Endothelial cell of umbilical vein (primary cell): ENCODE measurements at regions of chr2 and their contacts with region 1.

Region 1: DNA sequence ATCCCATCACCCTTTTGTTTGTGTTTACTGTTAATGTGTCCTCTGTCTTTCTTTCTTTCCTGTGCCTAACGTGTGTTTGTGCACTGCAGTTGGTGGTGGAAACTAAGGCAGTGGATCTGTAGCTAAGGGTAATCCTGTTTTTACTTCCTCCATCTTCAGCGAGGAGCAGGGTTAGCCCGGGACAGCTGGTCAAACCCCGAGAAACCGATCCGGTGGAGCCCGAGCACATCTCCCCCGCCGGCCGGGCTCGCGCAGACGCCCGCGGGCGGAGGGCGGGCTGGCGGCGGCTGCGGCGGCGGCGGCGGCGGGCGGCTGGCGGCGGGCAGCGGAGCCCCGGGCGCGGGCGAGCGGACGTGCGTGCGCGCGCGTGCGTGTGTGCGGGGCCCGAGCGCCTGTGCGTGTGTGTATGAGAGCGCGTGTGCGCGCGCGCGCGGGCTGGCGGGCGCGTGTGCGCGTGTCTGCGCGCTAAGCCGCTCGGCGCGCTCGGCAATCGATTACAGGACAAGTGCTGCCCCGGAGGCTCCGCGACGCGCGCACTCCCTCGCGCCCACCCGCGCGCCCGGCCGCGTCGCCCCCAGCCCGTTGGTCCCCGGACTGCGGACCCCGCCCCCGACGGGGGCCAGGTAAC is at the start of gene IKZF2:
- DNase-seq: peak; percentile 85
- H3K4me3 ChIP-seq: peak within 1 kb of the TSS; percentile 70 to 99 (median 87)
- H3K27ac ChIP-seq: peak within 1 kb of the TSS; percentile 27
- H3K4me1 ChIP-seq: peaks cover 7% of the 10 kb centered on the region
- H3K27me3 ChIP-seq: peaks cover 18 to 46% of the 10 kb centered on the region in 2 experiments
- CTCF ChIP-seq: no peak
- POLR2A ChIP-seq: no peak
- total RNA-seq, gene IKZF2: 0.46 and 0.72 TPM in 2 replicates

Region 2: GRCh38 chr2:212686285-212686895 is 465.2 kb before region 1 on chr2:
- CTCF ChIA-PET with region 1: interaction called, 46 read pairs
- POLR2A ChIA-PET with region 1: no interaction called
- dilution Hi-C with region 1: no loop called
- intact Hi-C with region 1: loop called (anchors 1 kb)
- DNase-seq: peak; percentile 67
- H3K4me3 ChIP-seq: no peak overlapping the region
- H3K27ac ChIP-seq: no peak overlapping the region
- H3K4me1 ChIP-seq: peaks cover 3% of the 10 kb centered on the region
- H3K27me3 ChIP-seq: no peaks in the 10 kb centered on the region
- CTCF ChIP-seq: peak; percentile 60 to 68
- POLR2A ChIP-seq: no peak

Region 3: GRCh38 chr2:212777020-212777491 is 374.5 kb before region 1 on chr2:
- CTCF ChIA-PET with region 1: interaction called, 103 read pairs
- POLR2A ChIA-PET with region 1: no interaction called
- dilution Hi-C with region 1: no loop called
- intact Hi-C with region 1: loop called (anchors 1 kb)
- DNase-seq: peak; percentile 39
- H3K4me3 ChIP-seq: no peak overlapping the region
- H3K27ac ChIP-seq: no peak overlapping the region
- H3K4me1 ChIP-seq: no peaks in the 10 kb centered on the region
- H3K27me3 ChIP-seq: no peaks in the 10 kb centered on the region
- CTCF ChIP-seq: peak; percentile 30 to 39
- POLR2A ChIP-seq: no peak

Region 4: GRCh38 chr2:212843409-212844199 is 307.9 kb before region 1 on chr2:
- CTCF ChIA-PET with region 1: interaction called, 3 read pairs
- POLR2A ChIA-PET with region 1: no interaction called
- dilution Hi-C with region 1: no loop called
- intact Hi-C with region 1: loop called (anchors 5 kb)
- DNase-seq: peak; percentile 90
- H3K4me3 ChIP-seq: no peak overlapping the region
- H3K27ac ChIP-seq: peak overlapping the region; percentile 96
- H3K4me1 ChIP-seq: peaks cover 21% of the 10 kb centered on the region
- H3K27me3 ChIP-seq: no peaks in the 10 kb centered on the region
- CTCF ChIP-seq: no peak
- POLR2A ChIP-seq: no peak

Region 5: GRCh38 chr2:212863185-212863588 is 288.4 kb before region 1 on chr2:
- CTCF ChIA-PET with region 1: interaction called, 4 read pairs
- POLR2A ChIA-PET with region 1: no interaction called
- dilution Hi-C with region 1: no loop called
- intact Hi-C with region 1: loop called (anchors 1 kb)
- DNase-seq: peak; percentile 29
- H3K4me3 ChIP-seq: no peak overlapping the region
- H3K27ac ChIP-seq: no peak overlapping the region
- H3K4me1 ChIP-seq: no peaks in the 10 kb centered on the region
- H3K27me3 ChIP-seq: no peaks in the 10 kb centered on the region
- CTCF ChIP-seq: peak; percentile 37 to 45
- POLR2A ChIP-seq: no peak

Region 6: GRCh38 chr2:212892193-212892592 is 259.4 kb before region 1 on chr2:
- CTCF ChIA-PET with region 1: interaction called, 16 read pairs
- POLR2A ChIA-PET with region 1: no interaction called
- dilution Hi-C with region 1: no loop called
- intact Hi-C with region 1: loop called (anchors 1 kb)
- DNase-seq: peak; percentile 60
- H3K4me3 ChIP-seq: no peak overlapping the region
- H3K27ac ChIP-seq: no peak overlapping the region
- H3K4me1 ChIP-seq: no peaks in the 10 kb centered on the region
- H3K27me3 ChIP-seq: no peaks in the 10 kb centered on the region
- CTCF ChIP-seq: peak; percentile 10 to 38
- POLR2A ChIP-seq: no peak

Region 7: DNA sequence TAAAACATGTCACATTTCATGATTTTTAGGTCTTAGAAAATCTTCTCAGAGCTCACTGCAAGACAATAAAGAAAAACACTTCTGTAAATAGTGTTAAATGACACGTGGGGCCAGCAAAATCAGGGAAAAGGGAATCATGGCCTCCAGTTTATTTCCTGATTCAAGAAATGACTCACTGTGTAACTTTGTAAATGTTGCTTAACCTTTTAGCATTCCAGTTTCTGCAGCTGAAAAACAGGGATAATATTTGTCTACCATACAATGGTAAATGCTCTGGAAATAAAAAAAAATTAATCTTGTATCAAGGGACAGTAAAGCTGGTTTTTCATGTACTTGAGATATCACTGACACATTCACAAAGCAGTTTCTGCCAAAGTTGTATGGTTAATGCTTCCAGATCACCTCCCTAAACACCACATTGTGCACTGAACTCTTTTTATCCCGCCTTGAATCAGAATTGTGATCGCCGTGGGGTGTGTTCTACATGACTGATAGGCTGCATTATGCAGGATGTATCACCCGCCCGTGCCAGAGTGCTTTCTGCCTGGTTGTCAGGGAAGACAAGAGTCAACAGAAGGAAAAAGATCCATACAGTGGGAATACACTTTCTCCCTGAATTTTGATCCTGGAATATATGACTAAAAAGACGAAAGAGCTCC is 239.0 kb before region 1 on chr2:
- CTCF ChIA-PET with region 1: no interaction called
- POLR2A ChIA-PET with region 1: no interaction called
- dilution Hi-C with region 1: no loop called
- intact Hi-C with region 1: loop called (anchors 1 kb)
- DNase-seq: peak; percentile 87
- H3K4me3 ChIP-seq: peak overlapping the region in 1 of 3 experiments; percentile 41
- H3K27ac ChIP-seq: peak overlapping the region; percentile 73
- H3K4me1 ChIP-seq: peaks cover 16% of the 10 kb centered on the region
- H3K27me3 ChIP-seq: no peaks in the 10 kb centered on the region
- CTCF ChIP-seq: no peak
- POLR2A ChIP-seq: no peak

Region 8: DNA sequence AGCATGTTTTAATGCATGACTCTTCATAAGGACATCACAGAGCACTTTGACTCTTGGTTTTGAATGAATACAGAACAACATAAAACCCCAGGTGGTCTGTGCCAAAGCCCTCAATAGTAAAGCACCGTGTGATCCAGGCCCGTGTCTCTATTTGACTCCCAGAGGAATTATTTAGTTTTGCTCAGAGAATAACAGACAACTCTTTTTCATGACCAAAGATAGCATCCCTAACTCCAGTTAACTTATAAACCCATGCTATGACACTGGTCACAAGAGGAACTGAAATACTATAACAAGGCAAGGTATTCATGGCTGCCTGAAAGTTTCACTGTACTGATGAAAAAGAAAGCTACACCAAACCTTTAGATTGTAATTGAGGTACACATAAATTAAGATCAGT is 128.6 kb before region 1 on chr2:
- CTCF ChIA-PET with region 1: no interaction called
- POLR2A ChIA-PET with region 1: no interaction called
- dilution Hi-C with region 1: no loop called
- intact Hi-C with region 1: no loop called
- DNase-seq: no peak
- H3K4me3 ChIP-seq: no peak overlapping the region
- H3K27ac ChIP-seq: no peak overlapping the region
- H3K4me1 ChIP-seq: no peaks in the 10 kb centered on the region
- H3K27me3 ChIP-seq: no peaks in the 10 kb centered on the region
- CTCF ChIP-seq: no peak
- POLR2A ChIP-seq: no peak